MCF 10A (cell line): ENCODE measurements at regions of chr15 and their contacts with region 1.

Region 1: GRCh38 chr15:45402162-45402954 is 24.0 kb upstream of the GATM start:
- DNase-seq: peak; percentile 99
- H3K4me3 Mint-ChIP-seq: peak overlapping the region; percentile 91
- H3K27ac Mint-ChIP-seq: peak overlapping the region; percentile 88
- H3K4me1 Mint-ChIP-seq: peaks cover 27% of the 10 kb centered on the region
- H3K27me3 Mint-ChIP-seq: no peaks in the 10 kb centered on the region
- CTCF ChIP-seq: no peak

Region 2: GRCh38 chr15:45198337-45199135 is 203.8 kb before region 1 on chr15:
- CTCF ChIA-PET with region 1: interaction called, 6 read pairs
- POLR2A ChIA-PET with region 1: interaction called, 62 read pairs
- intact Hi-C with region 1: loop called (anchors 1 kb)
- DNase-seq: peak; percentile 98
- H3K4me3 Mint-ChIP-seq: no peak overlapping the region
- H3K27ac Mint-ChIP-seq: no peak overlapping the region
- H3K4me1 Mint-ChIP-seq: peaks cover 8% of the 10 kb centered on the region
- H3K27me3 Mint-ChIP-seq: no peaks in the 10 kb centered on the region
- CTCF ChIP-seq: peak; percentile 79

Region 3: GRCh38 chr15:45279024-45279698 is 123.2 kb before region 1 on chr15:
- CTCF ChIA-PET with region 1: interaction called, 13 read pairs
- POLR2A ChIA-PET with region 1: interaction called, 8 read pairs
- intact Hi-C with region 1: loop called (anchors 1 kb)
- DNase-seq: peak; percentile 98
- H3K4me3 Mint-ChIP-seq: peak overlapping the region; percentile 75
- H3K27ac Mint-ChIP-seq: peak overlapping the region; percentile 51
- H3K4me1 Mint-ChIP-seq: no peaks in the 10 kb centered on the region
- H3K27me3 Mint-ChIP-seq: no peaks in the 10 kb centered on the region
- CTCF ChIP-seq: no peak

Region 4: GRCh38 chr15:45378149-45378912 is 24.0 kb before region 1 on chr15 and contains the start of gene GATM:
- CTCF ChIA-PET with region 1: interaction called, 14 read pairs
- POLR2A ChIA-PET with region 1: interaction called, 7 read pairs
- intact Hi-C with region 1: no loop called
- DNase-seq: peak; percentile 78
- H3K4me3 Mint-ChIP-seq: peak within 1 kb of the TSS; percentile 84
- H3K27ac Mint-ChIP-seq: no peak within 1 kb of the TSS
- H3K4me1 Mint-ChIP-seq: peaks cover 9% of the 10 kb centered on the region
- H3K27me3 Mint-ChIP-seq: peaks cover 34% of the 10 kb centered on the region
- CTCF ChIP-seq: peak; percentile 39
- total RNA-seq, gene GATM: 0.54 and 1.6 TPM in 2 replicates